Mucosa of descending colon (tissue), 3 donors: ENCODE measurements at regions of chr3 and their contacts with region 1.

Region 1: DNA sequence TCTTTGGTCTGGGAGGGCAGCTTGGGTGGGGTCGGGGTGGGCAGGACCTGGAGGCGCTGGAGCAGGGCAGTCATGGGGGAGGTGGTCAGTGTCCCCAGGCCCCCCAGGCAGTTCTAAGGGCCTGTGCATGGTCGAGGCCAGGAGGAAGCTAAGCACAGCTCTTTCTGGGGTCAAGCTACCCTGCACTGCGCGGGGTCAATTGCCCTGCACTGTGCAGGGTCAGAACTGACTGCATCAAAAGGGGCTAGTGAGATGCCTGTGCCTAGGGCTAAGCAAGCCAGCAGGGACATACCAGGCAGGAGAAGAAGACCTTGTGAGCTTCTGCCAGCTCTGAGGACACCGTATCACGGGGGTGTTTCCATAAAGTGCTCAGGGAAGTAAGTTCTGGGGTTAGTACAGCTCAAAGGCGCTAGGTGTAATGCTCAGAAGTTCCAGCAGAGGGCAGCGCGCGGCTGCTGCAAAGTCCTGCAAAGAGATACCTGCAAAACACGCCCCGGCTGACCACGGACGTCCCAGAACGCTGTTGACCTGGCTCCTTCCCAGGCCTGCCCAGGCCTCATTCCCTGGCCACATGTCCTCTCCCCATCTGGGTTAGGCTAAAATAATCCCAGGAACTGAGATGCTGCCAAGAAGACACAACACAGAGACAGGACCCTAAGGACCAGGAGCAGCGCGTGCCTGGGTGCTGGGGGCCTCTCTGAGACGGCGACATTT is 18.8 kb upstream of the IQSEC1 start:
- DNase-seq: peak; percentile 85 to 94 (median 89)
- ATAC-seq: peak; percentile 87
- H3K4me3 ChIP-seq: no peak overlapping the region
- H3K4me1 ChIP-seq: no peaks in the 10 kb centered on the region
- CTCF ChIP-seq: peak; percentile 97

Region 2: GRCh38 chr3:13452490-13453335 is 360.7 kb after region 1 on chr3:
- intact Hi-C with region 1: loop called (anchors 2 to 10 kb)
- DNase-seq: peak in 2 of 3 donors; percentile 44 to 78
- ATAC-seq: peak; percentile 57
- H3K4me3 ChIP-seq: peak overlapping the region; percentile 16
- H3K4me1 ChIP-seq: peaks cover 5% of the 10 kb centered on the region
- CTCF ChIP-seq: no peak